CD4-positive, alpha-beta T cell (primary cell): ENCODE measurements at regions of chr1 and their contacts with region 1.

Region 1: DNA sequence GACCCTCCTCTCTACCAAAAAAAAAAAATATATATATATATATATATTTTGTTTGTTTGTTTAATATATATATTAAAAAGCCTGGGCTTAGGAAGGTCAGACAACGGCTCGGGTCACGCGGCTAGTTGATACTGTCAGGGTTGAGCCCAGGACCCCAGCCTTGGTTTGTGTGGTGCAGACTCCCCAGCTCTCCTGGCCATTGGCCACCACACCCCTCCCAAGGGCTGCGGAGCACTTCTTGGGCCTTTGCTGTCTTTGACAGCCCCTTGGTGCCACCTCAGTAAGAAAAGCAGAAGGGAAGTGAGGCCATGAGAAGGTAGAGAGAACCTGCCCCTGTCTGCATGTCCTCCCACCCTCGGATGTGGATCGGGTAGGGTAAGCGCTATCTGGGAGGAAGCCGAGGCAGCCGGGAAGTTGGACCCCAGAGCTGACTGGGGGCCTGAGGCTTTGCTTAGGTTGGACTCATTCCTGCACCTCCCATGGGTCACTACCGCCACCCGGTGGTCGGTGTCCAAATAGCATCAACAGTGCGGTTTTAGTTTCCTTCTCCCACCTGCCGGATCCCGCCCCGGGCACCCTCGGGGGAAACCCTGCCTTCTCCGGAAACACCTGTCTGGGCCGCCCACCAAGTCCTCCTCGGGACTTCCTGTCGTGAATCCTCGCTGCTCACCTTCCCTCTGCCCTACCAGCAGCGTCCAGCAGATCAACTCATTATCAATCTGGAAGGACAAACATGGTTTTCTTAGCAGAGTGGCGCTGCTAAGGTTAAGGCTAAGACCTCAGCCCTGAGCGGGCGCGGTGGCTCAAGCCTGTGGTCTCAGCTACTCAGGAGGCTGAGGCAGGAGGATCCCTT is 29.8 kb upstream of the GNPAT start:
- DNase-seq: peak; percentile 77 to 93 (median 88)
- ATAC-seq: peak; percentile 96
- H3K4me3 ChIP-seq: peak overlapping the region; percentile 48
- H3K4me3 Mint-ChIP-seq: peak overlapping the region; percentile 89
- H3K27ac ChIP-seq: no peak overlapping the region
- H3K27ac Mint-ChIP-seq: peak overlapping the region; percentile 5
- H3K4me1 ChIP-seq: peaks cover 11% of the 10 kb centered on the region
- H3K4me1 Mint-ChIP-seq: peaks cover 11% of the 10 kb centered on the region
- H3K27me3 ChIP-seq: no peaks in the 10 kb centered on the region
- H3K27me3 Mint-ChIP-seq: no peaks in the 10 kb centered on the region
- CTCF ChIP-seq: peak; percentile 90

Region 2: DNA sequence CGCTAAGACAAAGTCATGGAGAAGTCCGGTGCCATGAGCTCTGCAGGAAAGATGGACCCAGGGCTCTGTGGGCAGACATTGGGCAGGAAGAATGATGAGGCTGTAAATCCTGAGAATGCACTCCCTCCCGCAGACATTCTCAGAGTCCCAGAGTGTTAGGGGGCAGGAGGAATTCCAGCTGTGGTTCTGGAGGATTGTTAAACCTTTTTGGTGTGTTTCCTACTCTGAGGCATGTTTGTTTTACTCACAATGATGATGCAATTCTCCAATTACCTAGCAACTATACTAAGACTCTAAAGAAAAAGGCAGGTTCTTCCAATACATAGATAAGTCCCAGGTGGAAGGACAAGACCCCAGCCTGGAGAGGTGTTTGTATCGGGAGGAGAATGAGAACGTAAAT is 466.8 kb before region 1 on chr1:
- CTCF ChIA-PET with region 1: no interaction called
- POLR2A ChIA-PET with region 1: no interaction called
- intact Hi-C with region 1: loop called (anchors 2 to 5 kb)
- DNase-seq: no peak
- ATAC-seq: no peak
- H3K4me3 ChIP-seq: no peak overlapping the region
- H3K4me3 Mint-ChIP-seq: no peak overlapping the region
- H3K27ac ChIP-seq: no peak overlapping the region
- H3K27ac Mint-ChIP-seq: no peak overlapping the region
- H3K4me1 ChIP-seq: no peaks in the 10 kb centered on the region
- H3K4me1 Mint-ChIP-seq: no peaks in the 10 kb centered on the region
- H3K27me3 ChIP-seq: no peaks in the 10 kb centered on the region
- H3K27me3 Mint-ChIP-seq: peaks cover 4% of the 10 kb centered on the region
- CTCF ChIP-seq: no peak

Region 3: GRCh38 chr1:230797942-230798418 is 413.3 kb before region 1 on chr1:
- CTCF ChIA-PET with region 1: no interaction called
- POLR2A ChIA-PET with region 1: no interaction called
- intact Hi-C with region 1: loop called in 1 of 2 experiments (anchors 5 kb)
- DNase-seq: peak in 4 of 14 experiments; percentile 5 to 28 (median 12)
- ATAC-seq: no peak
- H3K4me3 ChIP-seq: no peak overlapping the region
- H3K4me3 Mint-ChIP-seq: no peak overlapping the region
- H3K27ac ChIP-seq: no peak overlapping the region
- H3K27ac Mint-ChIP-seq: no peak overlapping the region
- H3K4me1 ChIP-seq: no peaks in the 10 kb centered on the region
- H3K4me1 Mint-ChIP-seq: no peaks in the 10 kb centered on the region
- H3K27me3 ChIP-seq: peaks cover 5 to 8% of the 10 kb centered on the region in 2 experiments
- H3K27me3 Mint-ChIP-seq: peaks cover 38% of the 10 kb centered on the region
- CTCF ChIP-seq: no peak

Region 4: DNA sequence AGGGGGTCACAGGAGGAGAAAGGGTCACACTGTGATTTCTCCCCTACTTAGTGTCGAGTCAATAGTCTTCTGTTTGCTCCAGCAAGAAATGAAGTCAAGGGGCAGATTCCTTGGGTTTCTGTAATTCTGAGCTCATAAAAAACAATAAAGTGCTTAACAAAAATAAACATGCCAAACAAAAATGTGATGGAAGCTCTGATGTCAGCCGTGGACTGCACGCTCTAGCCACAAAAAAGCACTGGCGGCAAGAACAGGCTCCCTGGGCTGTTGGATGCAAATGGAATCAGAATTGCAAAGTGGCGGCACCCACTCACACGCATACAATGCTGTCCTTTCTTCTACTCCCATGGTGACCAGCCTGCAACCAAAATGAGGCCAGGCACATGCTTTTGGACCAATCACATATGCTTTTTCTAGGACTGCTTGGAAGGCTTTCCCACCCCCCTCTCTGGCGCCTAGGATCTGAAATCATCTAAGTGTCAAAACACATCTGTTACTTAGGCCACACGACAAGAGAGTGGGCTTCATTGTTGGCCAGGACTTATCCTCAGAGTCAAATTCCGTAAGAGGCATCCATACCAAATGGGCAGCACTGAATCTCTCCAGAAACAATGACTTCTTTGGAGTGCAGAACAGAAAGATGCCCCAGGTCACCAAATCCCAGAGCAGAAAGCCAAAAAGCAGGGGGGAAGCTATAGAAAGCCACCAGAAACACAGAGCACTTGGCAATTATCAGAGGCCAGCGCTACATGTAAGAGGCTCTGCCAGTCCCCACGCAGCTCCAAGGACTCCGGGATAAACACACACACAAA is 352.1 kb before region 1 on chr1:
- CTCF ChIA-PET with region 1: no interaction called
- POLR2A ChIA-PET with region 1: no interaction called
- intact Hi-C with region 1: no loop called
- DNase-seq: no peak
- ATAC-seq: no peak
- H3K4me3 ChIP-seq: no peak overlapping the region
- H3K4me3 Mint-ChIP-seq: no peak overlapping the region
- H3K27ac ChIP-seq: no peak overlapping the region
- H3K27ac Mint-ChIP-seq: no peak overlapping the region
- H3K4me1 ChIP-seq: peaks cover 3% of the 10 kb centered on the region
- H3K4me1 Mint-ChIP-seq: peaks cover 13% of the 10 kb centered on the region
- H3K27me3 ChIP-seq: no peaks in the 10 kb centered on the region
- H3K27me3 Mint-ChIP-seq: no peaks in the 10 kb centered on the region
- CTCF ChIP-seq: no peak

Region 5: GRCh38 chr1:230917284-230918135 is 293.7 kb before region 1 on chr1:
- CTCF ChIA-PET with region 1: interaction called, 3 read pairs
- POLR2A ChIA-PET with region 1: no interaction called
- intact Hi-C with region 1: loop called (anchors 1 kb)
- DNase-seq: peak; percentile 51 to 90 (median 70)
- ATAC-seq: peak; percentile 73
- H3K4me3 ChIP-seq: no peak overlapping the region
- H3K4me3 Mint-ChIP-seq: no peak overlapping the region
- H3K27ac ChIP-seq: no peak overlapping the region
- H3K27ac Mint-ChIP-seq: peak overlapping the region; percentile 44
- H3K4me1 ChIP-seq: no peaks in the 10 kb centered on the region
- H3K4me1 Mint-ChIP-seq: no peaks in the 10 kb centered on the region
- H3K27me3 ChIP-seq: no peaks in the 10 kb centered on the region
- H3K27me3 Mint-ChIP-seq: no peaks in the 10 kb centered on the region
- CTCF ChIP-seq: peak; percentile 87

Region 6: DNA sequence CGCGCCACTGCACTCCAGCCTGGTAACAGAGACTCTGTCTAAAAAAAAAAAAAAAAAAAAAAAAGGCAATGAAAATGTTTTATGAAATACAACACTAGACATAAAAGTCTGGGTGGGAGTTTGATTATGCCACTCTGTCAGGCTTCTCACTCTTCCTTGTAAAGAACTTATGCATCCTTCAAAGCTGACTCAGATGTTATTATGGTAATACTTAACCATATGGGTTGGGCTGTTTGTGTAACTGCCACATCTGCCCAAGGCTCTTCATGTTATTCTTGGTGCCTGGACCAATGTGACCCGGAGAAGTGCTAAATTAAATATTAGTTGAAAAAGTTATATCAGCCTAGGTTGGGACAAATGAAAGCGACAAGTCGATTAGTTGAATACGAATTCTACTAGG is 195.0 kb before region 1 on chr1:
- CTCF ChIA-PET with region 1: no interaction called
- POLR2A ChIA-PET with region 1: no interaction called
- intact Hi-C with region 1: loop called in 1 of 2 experiments (anchors 10 kb)
- DNase-seq: no peak
- ATAC-seq: no peak
- H3K4me3 ChIP-seq: no peak overlapping the region
- H3K4me3 Mint-ChIP-seq: no peak overlapping the region
- H3K27ac ChIP-seq: no peak overlapping the region
- H3K27ac Mint-ChIP-seq: no peak overlapping the region
- H3K4me1 ChIP-seq: peaks cover 4% of the 10 kb centered on the region
- H3K4me1 Mint-ChIP-seq: peaks cover 13% of the 10 kb centered on the region
- H3K27me3 ChIP-seq: no peaks in the 10 kb centered on the region
- H3K27me3 Mint-ChIP-seq: no peaks in the 10 kb centered on the region
- CTCF ChIP-seq: no peak

Region 7: GRCh38 chr1:231091831-231092301 is 119.4 kb before region 1 on chr1:
- CTCF ChIA-PET with region 1: no interaction called
- POLR2A ChIA-PET with region 1: no interaction called
- intact Hi-C with region 1: no loop called
- DNase-seq: peak in 13 of 14 experiments; percentile 11 to 64 (median 25)
- ATAC-seq: no peak
- H3K4me3 ChIP-seq: no peak overlapping the region
- H3K4me3 Mint-ChIP-seq: no peak overlapping the region
- H3K27ac ChIP-seq: no peak overlapping the region
- H3K27ac Mint-ChIP-seq: no peak overlapping the region
- H3K4me1 ChIP-seq: no peaks in the 10 kb centered on the region
- H3K4me1 Mint-ChIP-seq: no peaks in the 10 kb centered on the region
- H3K27me3 ChIP-seq: peaks cover 7 to 8% of the 10 kb centered on the region in 2 experiments
- H3K27me3 Mint-ChIP-seq: peaks cover 41% of the 10 kb centered on the region
- CTCF ChIP-seq: peak; percentile 44